Activated CD8-positive, alpha-beta T cell treated with anti-CD3 and anti-CD28 coated beads for 36 hours (primary cell): ENCODE measurements at regions of chr3 and their contacts with region 1.

Region 1: DNA sequence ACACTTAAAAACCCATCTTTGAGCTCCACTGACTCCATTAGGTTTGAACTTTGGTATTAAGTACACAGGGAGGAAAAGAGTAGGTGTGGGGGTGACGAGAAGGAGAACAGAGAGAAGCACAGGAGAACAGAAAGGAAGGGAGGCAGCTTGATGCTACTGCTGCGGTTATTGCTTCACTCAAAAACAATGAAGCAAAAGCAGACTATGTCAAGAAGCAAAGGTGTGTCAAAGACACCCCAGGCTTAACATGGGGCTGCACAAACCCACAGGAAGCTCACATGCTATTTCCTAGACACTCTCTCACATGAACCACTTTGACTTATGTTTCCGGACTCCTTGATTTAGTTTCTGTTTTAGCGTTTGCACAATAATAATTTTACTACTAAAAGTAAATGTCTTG is 961.0 kb upstream of the CFAP20DC start:
- DNase-seq: peak; percentile 78
- ATAC-seq: peak; percentile 97
- H3K4me3 Mint-ChIP-seq: peak overlapping the region; percentile 59
- H3K27ac Mint-ChIP-seq: peak overlapping the region; percentile 93
- H3K4me1 Mint-ChIP-seq: peaks cover 78% of the 10 kb centered on the region
- H3K27me3 Mint-ChIP-seq: no peaks in the 10 kb centered on the region
- CTCF ChIP-seq: no peak

Region 2: GRCh38 chr3:59654123-59654479 is 356.7 kb before region 1 on chr3:
- CTCF ChIA-PET with region 1: no interaction called
- POLR2A ChIA-PET with region 1: no interaction called
- intact Hi-C with region 1: no loop called
- DNase-seq: no peak
- ATAC-seq: no peak
- H3K4me3 Mint-ChIP-seq: no peak overlapping the region
- H3K27ac Mint-ChIP-seq: no peak overlapping the region
- H3K4me1 Mint-ChIP-seq: no peaks in the 10 kb centered on the region
- H3K27me3 Mint-ChIP-seq: no peaks in the 10 kb centered on the region
- CTCF ChIP-seq: no peak

Region 3: DNA sequence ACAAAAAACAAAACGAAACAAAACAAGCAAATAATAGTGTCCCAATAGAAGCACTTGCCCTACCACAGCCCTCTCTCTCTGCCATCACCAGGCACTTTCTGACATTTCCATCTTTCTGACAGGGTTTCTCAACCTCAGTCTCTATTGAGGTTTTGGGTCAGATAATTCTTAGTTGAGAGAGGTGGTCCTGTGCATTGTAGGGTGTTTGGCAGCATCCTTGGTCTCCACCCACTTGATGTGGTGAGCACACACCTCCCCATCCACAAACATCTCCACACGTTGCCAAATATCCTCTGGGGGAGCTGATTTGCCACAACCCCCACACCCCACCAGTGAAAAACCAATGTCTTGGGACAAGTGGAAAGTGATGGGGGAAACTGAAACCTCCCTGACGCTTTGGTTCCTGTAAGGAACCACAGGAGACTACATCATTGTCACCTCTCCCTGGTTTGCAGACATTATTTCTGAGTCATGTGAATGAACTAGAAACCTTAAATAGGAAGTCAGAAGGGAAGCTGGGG is 227.3 kb before region 1 on chr3:
- CTCF ChIA-PET with region 1: no interaction called
- POLR2A ChIA-PET with region 1: no interaction called
- intact Hi-C with region 1: loop called (anchors 10 kb)
- DNase-seq: peak; percentile 66
- ATAC-seq: peak; percentile 87
- H3K4me3 Mint-ChIP-seq: no peak overlapping the region
- H3K27ac Mint-ChIP-seq: peak overlapping the region; percentile 51
- H3K4me1 Mint-ChIP-seq: peaks cover 16% of the 10 kb centered on the region
- H3K27me3 Mint-ChIP-seq: peaks cover 3% of the 10 kb centered on the region
- CTCF ChIP-seq: no peak

Region 4: DNA sequence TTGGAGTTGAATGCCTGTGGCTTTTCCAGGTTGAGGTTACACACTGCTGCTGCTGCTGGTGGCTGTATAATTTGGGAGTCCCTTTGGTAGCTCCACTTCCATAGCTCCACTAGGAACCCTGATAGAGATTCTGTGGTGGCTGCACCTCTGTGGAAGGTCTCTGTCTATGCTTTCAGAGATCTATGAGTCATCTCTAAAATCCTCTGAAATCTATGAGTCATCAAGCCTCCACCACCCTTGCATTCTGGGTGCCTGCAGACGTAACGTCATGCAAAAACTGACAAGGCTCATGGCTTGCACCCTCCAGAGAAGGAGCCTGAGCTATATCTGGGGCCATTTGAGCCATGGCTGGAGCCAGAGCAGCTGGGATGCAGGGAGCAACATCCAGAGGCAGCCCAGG is 76.0 kb after region 1 on chr3:
- CTCF ChIA-PET with region 1: no interaction called
- POLR2A ChIA-PET with region 1: no interaction called
- intact Hi-C with region 1: loop called (anchors 5 kb)
- DNase-seq: peak; percentile 65
- ATAC-seq: peak; percentile 95
- H3K4me3 Mint-ChIP-seq: no peak overlapping the region
- H3K27ac Mint-ChIP-seq: peak overlapping the region; percentile 82
- H3K4me1 Mint-ChIP-seq: peaks cover 49% of the 10 kb centered on the region
- H3K27me3 Mint-ChIP-seq: no peaks in the 10 kb centered on the region
- CTCF ChIP-seq: no peak